BJ (cell line): ENCODE measurements at regions of chr1 and their contacts with region 1.

Region 1: DNA sequence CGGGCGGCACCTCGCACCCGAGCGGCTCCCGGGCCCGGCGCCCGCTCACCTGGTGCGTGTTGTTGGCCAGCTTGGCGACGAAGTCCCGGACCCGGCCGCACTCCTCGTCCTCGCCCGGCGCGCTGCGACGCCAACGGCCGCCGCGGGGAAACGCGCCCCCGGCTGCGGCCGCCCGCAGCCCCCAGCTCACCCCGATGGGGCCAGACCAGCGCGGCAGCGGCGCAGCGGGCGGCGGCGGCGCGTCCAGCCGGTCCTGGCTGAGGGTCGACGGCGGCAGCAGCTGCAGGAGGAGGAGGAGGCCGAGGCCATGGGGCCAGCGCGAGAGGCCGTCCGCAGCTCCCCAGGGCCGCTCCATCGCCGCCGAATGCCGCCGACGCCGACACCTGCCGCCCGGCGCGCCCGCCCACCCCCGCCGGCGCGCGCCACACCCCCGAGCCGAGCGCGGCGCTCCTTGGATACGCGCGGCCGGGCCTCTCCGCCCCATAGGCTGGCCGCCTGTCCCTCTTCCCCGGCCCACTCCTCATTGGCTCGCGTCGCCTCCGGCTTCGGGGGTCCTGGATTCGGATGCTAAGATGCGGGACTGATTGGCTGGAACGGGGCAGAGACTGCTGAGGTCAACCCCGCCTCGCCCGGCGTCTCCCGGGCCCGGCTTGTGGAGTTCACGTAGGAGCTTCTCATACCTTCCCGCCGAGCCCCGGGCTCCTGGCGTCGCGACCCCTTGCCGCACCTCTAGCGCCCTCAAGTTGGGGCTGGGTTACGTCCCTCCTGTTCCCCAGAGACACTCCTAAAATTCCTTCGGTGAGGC is at the start of gene SORT1:
- DNase-seq: peak; percentile 32
- H3K4me3 ChIP-seq: peak within 1 kb of the TSS; percentile 50
- H3K27me3 ChIP-seq: no peaks in the 10 kb centered on the region
- CTCF ChIP-seq: 0 out of 2 replicates have a peak, but pooled peaks have one; percentile 10
- polyA plus RNA-seq, gene SORT1: 38.6 and 52.6 TPM in 2 replicates

Region 2: GRCh38 chr1:109228167-109228566 is 169.6 kb before region 1 on chr1:
- CTCF ChIA-PET with region 1: no interaction called
- POLR2A ChIA-PET with region 1: interaction called, 11 read pairs
- DNase-seq: no peak
- H3K4me3 ChIP-seq: no peak overlapping the region
- H3K27me3 ChIP-seq: no peaks in the 10 kb centered on the region
- CTCF ChIP-seq: no peak

Region 3: DNA sequence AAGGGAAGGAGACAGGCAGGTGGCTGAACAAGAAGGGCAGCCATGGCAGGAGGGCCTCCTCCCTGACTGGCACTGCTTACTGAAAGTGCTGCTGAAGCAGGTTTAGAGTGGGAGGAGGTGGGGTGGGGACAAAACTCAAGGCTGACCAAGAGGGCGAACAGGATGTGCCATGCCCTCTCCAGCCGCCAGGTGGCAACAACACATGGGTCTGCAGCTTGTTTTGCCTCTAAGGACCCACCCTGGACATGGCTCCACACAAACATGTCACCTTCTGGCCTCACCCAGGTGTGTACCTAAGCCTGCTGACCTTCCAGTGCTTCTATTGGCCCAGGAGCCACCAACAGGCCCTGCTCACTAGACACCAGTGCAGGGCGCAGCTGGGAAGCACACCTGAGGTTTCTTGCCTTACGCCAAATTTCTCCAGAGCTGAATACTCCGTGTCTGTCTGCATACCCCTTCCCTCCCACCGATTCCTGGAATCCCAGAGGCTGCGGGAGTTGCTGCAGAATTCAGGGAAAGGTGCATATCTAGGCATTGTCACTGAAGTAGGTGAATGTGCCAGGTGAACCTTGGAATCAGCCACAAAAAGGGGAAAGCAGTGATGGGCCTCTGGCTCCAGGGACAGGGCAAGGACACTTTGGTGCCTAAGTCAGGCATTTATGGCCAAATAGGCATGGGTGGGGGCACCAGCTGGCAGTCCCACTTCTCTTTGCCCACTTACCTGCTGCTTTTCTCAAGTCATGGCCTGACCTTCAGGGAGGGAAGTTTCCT is 120.1 kb before region 1 on chr1:
- CTCF ChIA-PET with region 1: interaction called, 140 read pairs
- POLR2A ChIA-PET with region 1: no interaction called
- DNase-seq: no peak
- H3K4me3 ChIP-seq: no peak overlapping the region
- H3K27me3 ChIP-seq: no peaks in the 10 kb centered on the region
- CTCF ChIP-seq: peak; percentile 93

Region 4: GRCh38 chr1:109412551-109412950 is 14.8 kb after region 1 on chr1:
- CTCF ChIA-PET with region 1: interaction called, 20 read pairs
- POLR2A ChIA-PET with region 1: no interaction called
- DNase-seq: no peak
- H3K4me3 ChIP-seq: no peak overlapping the region
- H3K27me3 ChIP-seq: no peaks in the 10 kb centered on the region
- CTCF ChIP-seq: no peak

Region 5: GRCh38 chr1:109619576-109620433 is 222.1 kb after region 1 on chr1 and contains the starts of genes AMPD2 and GNAT2:
- CTCF ChIA-PET with region 1: no interaction called
- POLR2A ChIA-PET with region 1: no interaction called
- DNase-seq: no peak
- H3K4me3 ChIP-seq: peak within 1 kb of the TSS; percentile 83
- H3K27me3 ChIP-seq: no peaks in the 10 kb centered on the region
- CTCF ChIP-seq: no peak
- polyA plus RNA-seq, gene AMPD2: 43.1 and 86.9 TPM in 2 replicates
- polyA plus RNA-seq, gene GNAT2: 0.09 and 0.15 TPM in 2 replicates